HAP-1 (cell line): ENCODE measurements at regions of chr7 and their contacts with region 1.

Region 1: DNA sequence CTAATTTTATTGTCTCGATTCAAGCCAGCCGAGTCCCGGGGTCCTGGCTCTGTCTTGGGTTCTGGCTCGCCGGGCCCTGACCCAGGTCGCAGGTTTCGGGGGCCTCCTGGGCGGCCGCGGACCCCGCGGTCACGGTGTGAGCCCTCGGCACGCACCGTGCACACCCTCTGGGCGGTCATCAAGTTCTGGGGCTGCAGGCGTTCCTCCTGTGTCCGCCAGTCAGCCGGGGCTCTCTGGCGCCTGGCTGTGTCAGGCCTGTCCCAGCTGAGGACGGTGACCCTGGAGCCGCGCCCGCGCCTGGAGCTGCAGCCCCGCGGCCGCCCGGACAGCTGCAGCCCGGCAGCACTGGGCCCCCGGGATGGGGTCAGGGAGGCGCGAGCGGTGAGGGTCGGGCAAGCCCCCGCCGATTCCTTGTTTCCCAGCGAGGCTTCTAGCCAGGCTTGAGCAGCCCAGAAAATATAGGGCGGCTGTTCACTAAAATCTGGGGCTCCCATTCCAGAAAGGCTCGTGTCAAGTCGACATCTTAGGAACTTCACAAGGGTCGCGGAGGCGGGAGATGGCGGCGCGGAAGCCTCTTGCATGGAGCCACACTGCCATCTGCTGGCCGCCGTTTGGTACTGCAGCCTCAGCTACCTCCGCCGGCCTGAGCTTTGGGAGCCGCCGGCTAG is 4.2 kb upstream of the HOXA7 start:
- DNase-seq: peak; percentile 84 to 94
- H3K4me3 ChIP-seq: peak overlapping the region; percentile 70
- H3K4me1 ChIP-seq: peaks cover 30% of the 10 kb centered on the region
- H3K27me3 ChIP-seq: no peaks in the 10 kb centered on the region

Region 2: GRCh38 chr7:26200444-26201246 is 960.0 kb before region 1 on chr7 and contains the start of gene HNRNPA2B1:
- in situ Hi-C with region 1: loop called (anchors 25 kb)
- DNase-seq: peak; percentile 95 to 97
- H3K4me3 ChIP-seq: peak within 1 kb of the TSS; percentile 99
- H3K4me1 ChIP-seq: peaks cover 28% of the 10 kb centered on the region
- H3K27me3 ChIP-seq: no peaks in the 10 kb centered on the region

Region 3: GRCh38 chr7:26365077-26365900 is 795.4 kb before region 1 on chr7:
- in situ Hi-C with region 1: loop called (anchors 5 kb)
- DNase-seq: peak; percentile 70 to 76
- H3K4me3 ChIP-seq: no peak overlapping the region
- H3K4me1 ChIP-seq: no peaks in the 10 kb centered on the region; the same call in 1 of the 2 replicates
- H3K27me3 ChIP-seq: no peaks in the 10 kb centered on the region

Region 4: GRCh38 chr7:26857510-26858240 is 303.0 kb before region 1 on chr7:
- in situ Hi-C with region 1: loop called (anchors 5 kb)
- DNase-seq: peak; percentile 72 to 76
- H3K4me3 ChIP-seq: peak overlapping the region; percentile 31
- H3K4me1 ChIP-seq: peaks cover 46% of the 10 kb centered on the region
- H3K27me3 ChIP-seq: no peaks in the 10 kb centered on the region

Region 5: GRCh38 chr7:26993816-26994810 is 166.6 kb before region 1 on chr7:
- in situ Hi-C with region 1: no loop called
- DNase-seq: no peak
- H3K4me3 ChIP-seq: no peak overlapping the region
- H3K4me1 ChIP-seq: peaks cover 13% of the 10 kb centered on the region
- H3K27me3 ChIP-seq: no peaks in the 10 kb centered on the region

Region 6: DNA sequence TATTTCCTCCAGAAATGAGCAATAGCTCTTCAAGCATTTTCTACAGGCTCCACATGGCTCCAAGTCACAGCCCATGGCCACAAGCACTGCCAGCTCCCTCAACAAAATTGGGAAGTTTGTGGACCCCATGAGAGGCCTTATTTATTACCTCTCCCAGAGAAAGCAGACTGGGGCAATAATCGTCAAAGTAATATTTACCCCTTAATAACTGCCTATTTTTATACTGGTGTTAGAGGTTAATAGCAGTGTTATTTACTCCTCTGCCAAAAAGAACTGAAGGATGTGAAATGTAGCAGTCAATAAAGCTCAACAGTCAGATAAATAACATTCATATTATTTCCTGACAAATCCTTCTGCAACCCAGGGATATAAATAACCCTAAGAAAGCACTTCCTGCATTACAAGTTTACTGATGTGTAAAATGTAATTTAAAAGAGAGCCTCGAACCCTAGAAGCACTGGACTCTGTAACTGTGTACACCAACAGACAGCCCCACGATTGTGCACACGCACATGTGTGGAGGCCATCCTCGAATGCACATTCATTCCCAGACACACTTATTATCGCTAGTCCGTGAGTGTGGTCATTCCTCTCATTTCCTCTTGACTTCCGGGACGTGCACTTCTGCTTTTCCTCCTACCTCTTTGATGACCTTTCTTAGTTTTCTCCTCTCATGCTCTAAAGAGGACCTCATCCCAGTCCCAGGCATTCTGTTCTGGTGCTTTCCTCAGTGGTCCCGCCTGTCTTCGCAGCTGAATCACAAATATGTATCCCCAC is 239.3 kb after region 1 on chr7:
- in situ Hi-C with region 1: no loop called
- DNase-seq: no peak
- H3K4me3 ChIP-seq: no peak overlapping the region
- H3K4me1 ChIP-seq: no peaks in the 10 kb centered on the region
- H3K27me3 ChIP-seq: no peaks in the 10 kb centered on the region

Region 7: GRCh38 chr7:27423272-27423671 is 262.6 kb after region 1 on chr7:
- in situ Hi-C with region 1: no loop called
- DNase-seq: no peak
- H3K4me3 ChIP-seq: no peak overlapping the region
- H3K4me1 ChIP-seq: no peaks in the 10 kb centered on the region
- H3K27me3 ChIP-seq: no peaks in the 10 kb centered on the region